CD4-positive, alpha-beta memory T cell (primary cell): ENCODE measurements at regions of chr19 and their contacts with region 1.

Region 1: GRCh38 chr19:46704379-46705076 is 12.4 kb downstream of the PRKD2 start:
- DNase-seq: peak; percentile 74 to 83 (median 79)
- H3K4me3 ChIP-seq: no peak overlapping the region
- H3K4me3 Mint-ChIP-seq: peak overlapping the region in 1 of 8 donors; percentile 45
- H3K27ac ChIP-seq: no peak overlapping the region
- H3K27ac Mint-ChIP-seq: peak overlapping the region; percentile 10 to 92 (median 87)
- H3K4me1 ChIP-seq: peaks cover 14% of the 10 kb centered on the region
- H3K4me1 Mint-ChIP-seq: peaks cover 6 to 18% (median 12%) of the 10 kb centered on the region in 4 donors
- H3K27me3 ChIP-seq: no peaks in the 10 kb centered on the region
- H3K27me3 Mint-ChIP-seq: no peaks in the 10 kb centered on the region

Region 2: DNA sequence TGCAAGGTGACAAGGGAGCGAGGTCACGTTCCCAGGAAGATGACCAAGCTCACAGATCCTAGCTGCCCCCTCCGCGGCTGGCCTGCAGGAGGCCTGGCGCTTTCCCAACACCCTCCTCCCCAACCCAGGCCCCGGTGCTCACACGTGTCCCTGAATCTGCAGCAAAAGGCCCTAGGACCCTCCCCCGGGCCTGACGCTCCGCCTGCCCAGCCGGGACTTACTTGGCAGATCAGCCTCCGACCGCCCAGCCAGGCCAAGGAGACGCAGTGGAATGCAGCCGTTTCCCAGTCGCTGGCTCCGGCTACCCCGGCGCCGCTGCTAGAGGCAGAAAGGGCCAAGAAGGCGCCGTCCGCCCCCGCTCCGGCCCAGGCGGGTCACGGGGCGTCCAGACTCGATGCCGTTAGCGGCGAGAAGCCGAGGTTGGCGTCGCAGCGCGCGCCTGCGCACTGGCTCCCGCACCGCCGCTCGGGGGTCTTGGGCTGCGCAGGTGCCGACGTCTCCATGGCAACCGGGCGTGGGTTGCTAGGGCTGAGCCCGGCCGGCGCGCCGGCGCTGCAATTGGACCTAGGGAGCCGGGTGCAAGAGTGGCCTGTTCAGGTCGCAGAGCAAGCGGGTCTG is 233.3 kb before region 1 on chr19 and contains the start of gene PNMA8A:
- CTCF ChIA-PET with region 1: no interaction called
- POLR2A ChIA-PET with region 1: no interaction called
- intact Hi-C with region 1: no loop called
- DNase-seq: no peak
- H3K4me3 ChIP-seq: no peak within 1 kb of the TSS
- H3K4me3 Mint-ChIP-seq: peak within 1 kb of the TSS in 1 of 8 donors; percentile 16
- H3K27ac ChIP-seq: no peak within 1 kb of the TSS
- H3K27ac Mint-ChIP-seq: no peak within 1 kb of the TSS
- H3K4me1 ChIP-seq: no peaks in the 10 kb centered on the region
- H3K4me1 Mint-ChIP-seq: peaks cover 9 to 16% (median 10%) of the 10 kb centered on the region in 4 donors
- H3K27me3 ChIP-seq: peaks cover 10% of the 10 kb centered on the region
- H3K27me3 Mint-ChIP-seq: peaks cover 33 to 51% of the 10 kb centered on the region in 2 donors
- total RNA-seq, gene PNMA8A: 0.26 TPM in 1 of 2 experiments, not detected in the other

Region 3: DNA sequence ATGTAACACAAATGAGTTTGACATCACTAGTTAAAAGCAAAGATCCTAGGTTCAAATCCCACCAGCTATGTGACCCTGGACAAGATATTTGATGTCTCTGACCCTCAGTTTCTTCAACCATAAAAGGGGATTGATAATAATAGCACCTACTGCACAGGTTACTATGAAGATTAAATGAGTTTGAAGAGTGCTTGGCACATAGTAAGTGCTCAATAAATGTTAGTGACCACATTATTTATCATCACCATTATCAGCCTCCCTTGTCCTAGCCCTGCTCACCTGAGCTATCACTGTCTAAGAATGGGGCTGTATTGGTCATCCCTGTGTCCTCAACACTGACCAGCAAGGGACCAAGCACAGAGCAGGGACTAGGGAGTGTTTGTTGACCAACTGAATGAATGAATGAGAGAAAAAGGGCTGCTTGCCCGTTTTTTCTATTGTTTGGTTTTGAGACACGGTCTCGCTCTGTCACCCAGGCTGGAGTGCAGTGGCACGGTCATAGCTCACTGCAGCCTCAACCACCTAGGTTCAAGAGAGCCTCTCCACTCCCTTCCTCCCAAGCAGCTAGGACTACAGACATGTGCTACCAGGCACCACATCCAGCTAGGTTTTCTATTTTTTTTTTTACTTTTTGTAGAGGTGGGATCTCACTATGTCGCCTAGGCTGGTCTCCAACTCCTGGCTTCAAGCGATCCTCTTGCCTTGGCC is 16.9 kb before region 1 on chr19:
- CTCF ChIA-PET with region 1: interaction called, 28 read pairs
- POLR2A ChIA-PET with region 1: interaction called, 3 read pairs
- intact Hi-C with region 1: no loop called
- DNase-seq: no peak
- H3K4me3 ChIP-seq: no peak overlapping the region
- H3K4me3 Mint-ChIP-seq: no peak overlapping the region
- H3K27ac ChIP-seq: no peak overlapping the region
- H3K27ac Mint-ChIP-seq: peak overlapping the region in 3 of 7 donors; percentile 36 to 64 (median 62)
- H3K4me1 ChIP-seq: no peaks in the 10 kb centered on the region
- H3K4me1 Mint-ChIP-seq: peaks cover 0 to 2% (median under 1%) of the 10 kb centered on the region in 4 donors
- H3K27me3 ChIP-seq: no peaks in the 10 kb centered on the region
- H3K27me3 Mint-ChIP-seq: no peaks in the 10 kb centered on the region

Region 4: GRCh38 chr19:46717034-46717723 is 12.7 kb after region 1 on chr19 and contains the start of gene PRKD2:
- CTCF ChIA-PET with region 1: interaction called, 57 read pairs
- POLR2A ChIA-PET with region 1: interaction called, 57 read pairs
- intact Hi-C with region 1: loop called (anchors 1 kb)
- DNase-seq: peak; percentile 76 to 85 (median 79)
- H3K4me3 ChIP-seq: peak within 1 kb of the TSS; percentile 82 to 94
- H3K4me3 Mint-ChIP-seq: peak within 1 kb of the TSS; percentile 93 to 98 (median 94)
- H3K27ac ChIP-seq: peak within 1 kb of the TSS; percentile 95
- H3K27ac Mint-ChIP-seq: peak within 1 kb of the TSS; percentile 97 to 99 (median 98)
- H3K4me1 ChIP-seq: peaks cover 44% of the 10 kb centered on the region
- H3K4me1 Mint-ChIP-seq: peaks cover 23 to 64% (median 37%) of the 10 kb centered on the region in 4 donors
- H3K27me3 ChIP-seq: no peaks in the 10 kb centered on the region
- H3K27me3 Mint-ChIP-seq: no peaks in the 10 kb centered on the region
- total RNA-seq, gene PRKD2: 115 to 122 TPM

Region 5: DNA sequence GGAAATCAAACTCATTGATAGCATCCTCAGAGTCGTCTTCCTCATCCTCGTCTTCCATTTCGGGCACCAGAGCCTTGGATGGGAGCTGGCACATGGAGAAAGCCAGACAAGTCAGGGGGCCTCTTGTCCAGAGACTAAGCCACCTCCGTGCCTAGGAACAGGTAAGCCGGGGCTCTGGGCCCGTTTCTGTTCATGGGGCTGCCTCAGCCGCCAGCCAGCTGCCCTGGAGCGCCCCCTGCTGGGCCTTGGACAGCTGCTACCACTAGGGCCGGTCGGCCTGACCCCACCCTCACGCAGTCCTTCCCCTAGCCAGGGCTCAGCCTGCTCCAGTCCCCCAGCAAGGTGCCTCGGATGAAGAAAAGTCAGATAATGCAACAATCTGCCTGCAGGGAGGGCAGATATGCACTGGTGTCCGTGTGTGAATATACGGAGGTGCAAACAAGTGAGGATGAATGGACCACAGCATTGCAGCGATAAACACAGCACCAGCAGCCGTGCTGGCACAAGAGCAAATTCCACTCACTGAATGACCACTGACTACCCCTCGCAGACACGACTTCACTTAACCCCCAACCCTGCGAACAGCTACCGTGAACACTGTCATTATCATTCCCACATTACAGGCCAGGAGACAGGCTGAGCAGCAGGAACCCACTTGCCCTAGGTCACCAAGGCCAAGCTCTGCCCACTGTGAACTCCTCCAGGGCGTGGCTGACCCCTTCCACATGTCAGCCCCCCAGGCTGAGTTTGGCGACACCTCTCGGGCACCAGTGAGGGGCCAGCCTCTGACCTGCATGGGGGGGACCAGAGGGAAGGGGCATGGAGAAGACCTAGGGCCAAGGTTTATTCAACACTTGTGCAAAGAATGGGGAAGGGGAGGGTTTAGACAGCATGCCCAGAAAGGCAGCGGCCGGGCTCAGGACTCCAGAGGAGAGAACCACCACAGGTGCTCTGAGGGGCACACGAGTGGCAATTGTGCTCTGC is 24.5 kb after region 1 on chr19:
- CTCF ChIA-PET with region 1: interaction called, 173 read pairs
- POLR2A ChIA-PET with region 1: interaction called, 72 read pairs
- intact Hi-C with region 1: loop called (anchors 1 kb)
- DNase-seq: peak; percentile 77 to 82 (median 78)
- H3K4me3 ChIP-seq: no peak overlapping the region
- H3K4me3 Mint-ChIP-seq: peak overlapping the region in 1 of 8 donors; percentile 1
- H3K27ac ChIP-seq: no peak overlapping the region
- H3K27ac Mint-ChIP-seq: peak overlapping the region in 4 of 7 donors; percentile 25 to 78 (median 56)
- H3K4me1 ChIP-seq: peaks cover 9% of the 10 kb centered on the region
- H3K4me1 Mint-ChIP-seq: peaks cover 8 to 10% (median 9%) of the 10 kb centered on the region in 4 donors
- H3K27me3 ChIP-seq: no peaks in the 10 kb centered on the region
- H3K27me3 Mint-ChIP-seq: no peaks in the 10 kb centered on the region

Region 6: DNA sequence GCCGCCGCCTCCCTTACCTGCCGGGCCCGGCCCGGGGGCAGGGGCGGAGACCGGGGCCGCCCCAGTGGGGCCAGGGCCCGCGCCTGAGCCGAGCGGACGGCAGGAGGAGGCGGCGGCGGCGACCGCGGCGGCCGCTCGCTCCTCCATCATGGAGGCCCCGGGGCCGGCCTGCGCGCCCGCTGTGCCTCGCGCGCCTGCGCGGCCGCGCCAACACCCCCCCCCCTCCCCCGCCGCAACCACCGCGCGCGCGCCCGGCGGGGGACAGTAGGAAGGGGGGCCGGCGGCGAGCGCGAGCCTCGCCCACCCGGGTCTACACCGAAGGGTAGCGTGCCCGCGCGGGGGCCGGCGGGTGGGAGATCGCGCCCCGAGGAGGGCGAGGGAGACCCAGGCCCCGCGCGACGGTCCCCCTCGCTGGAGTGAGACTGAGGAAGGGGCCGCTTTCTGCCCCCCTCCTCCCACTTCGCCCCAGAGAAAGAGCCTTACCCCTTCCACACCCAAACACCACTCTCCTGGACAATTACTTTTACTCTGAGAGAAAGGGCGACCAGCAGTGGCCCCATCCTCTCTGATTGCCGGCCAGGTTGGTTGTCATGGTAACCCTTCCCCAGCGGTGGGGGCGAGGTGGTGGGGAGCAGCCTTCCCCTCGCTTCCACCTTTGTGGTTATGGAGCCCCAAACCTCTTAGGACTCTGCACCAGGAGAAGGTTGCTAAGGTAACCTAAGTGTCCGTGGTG is 41.9 kb after region 1 on chr19 and contains the start of gene STRN4:
- CTCF ChIA-PET with region 1: interaction called, 82 read pairs
- POLR2A ChIA-PET with region 1: no interaction called
- intact Hi-C with region 1: loop called (anchors 1 kb)
- DNase-seq: peak; percentile 49 to 74 (median 52)
- H3K4me3 ChIP-seq: peak within 1 kb of the TSS; percentile 54 to 80
- H3K4me3 Mint-ChIP-seq: peak within 1 kb of the TSS; percentile 88 to 94 (median 90)
- H3K27ac ChIP-seq: peak within 1 kb of the TSS; percentile 76
- H3K27ac Mint-ChIP-seq: peak within 1 kb of the TSS; percentile 92 to 96 (median 95)
- H3K4me1 ChIP-seq: peaks cover 35% of the 10 kb centered on the region
- H3K4me1 Mint-ChIP-seq: peaks cover 35 to 64% (median 49%) of the 10 kb centered on the region in 4 donors
- H3K27me3 ChIP-seq: no peaks in the 10 kb centered on the region
- H3K27me3 Mint-ChIP-seq: no peaks in the 10 kb centered on the region
- total RNA-seq, gene STRN4: 81.2 to 88.8 TPM